Stomach (tissue), 19 donors: ENCODE measurements at regions of chr19 and their contacts with region 1.

Region 1: DNA sequence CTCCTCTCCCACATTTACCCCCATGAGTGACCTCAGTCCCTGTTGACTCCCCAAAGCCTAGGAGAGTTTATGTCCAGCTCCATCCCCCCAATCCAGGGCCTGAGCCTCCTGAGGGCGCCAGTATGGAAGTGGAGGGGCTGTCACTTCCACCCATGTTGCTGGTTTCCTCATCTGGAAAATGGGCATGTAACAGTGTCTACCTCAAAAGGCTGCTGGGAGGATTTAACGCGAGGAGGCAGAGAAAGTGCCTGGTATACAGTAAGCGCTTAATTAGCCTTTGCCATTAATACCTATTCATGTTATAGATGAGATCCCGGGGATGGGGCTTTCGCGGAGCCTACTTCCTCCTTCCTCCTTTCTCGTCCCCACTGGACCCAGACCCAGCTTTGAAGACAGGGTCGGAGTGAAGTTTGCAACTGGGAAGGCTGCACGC is 476 bp downstream of the TYK2 start:
- DNase-seq: no peak
- H3K4me3 ChIP-seq: peak overlapping the region; percentile 74 to 97 (median 90)
- H3K27ac ChIP-seq: peak overlapping the region; percentile 90 to 94 (median 91)
- H3K4me1 ChIP-seq: peaks cover 10 to 26% (median 19%) of the 10 kb centered on the region in 4 donors
- H3K27me3 ChIP-seq: no peaks in the 10 kb centered on the region
- CTCF ChIP-seq: no peak
- EP300 ChIP-seq: no peak
- POLR2A ChIP-seq: no peak

Region 2: DNA sequence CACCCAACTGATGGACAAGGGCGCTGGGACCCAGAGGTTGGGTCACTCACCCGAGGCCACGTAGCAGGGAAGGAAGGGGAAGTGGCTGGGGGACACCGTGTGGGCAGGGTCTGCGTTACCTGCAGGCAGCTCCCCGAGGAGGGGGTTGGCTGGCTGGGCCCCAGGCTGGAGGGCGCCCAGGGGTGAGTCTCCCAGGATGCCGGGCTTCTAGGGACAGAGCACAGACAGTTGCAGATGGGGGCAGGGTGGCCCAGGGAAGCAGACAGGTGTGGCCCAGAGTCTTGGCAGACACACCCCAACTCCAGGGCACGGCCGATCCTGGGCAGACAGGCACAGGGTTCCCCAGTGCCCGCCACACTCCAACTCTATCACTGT is 58.5 kb before region 1 on chr19:
- intact Hi-C with region 1: loop called (anchors 10 kb)
- DNase-seq: no peak
- H3K4me3 ChIP-seq: no peak overlapping the region
- H3K27ac ChIP-seq: no peak overlapping the region
- H3K4me1 ChIP-seq: peaks cover 0 to 2% (median 1%) of the 10 kb centered on the region in 4 donors
- H3K27me3 ChIP-seq: no peaks in the 10 kb centered on the region
- CTCF ChIP-seq: no peak
- EP300 ChIP-seq: no peak
- POLR2A ChIP-seq: no peak